Activated T-helper 2 cell treated with anti-CD3 and anti-CD28 coated beads, Interferon-gamma antibody, Interleukin-2, Interleukin-4, amounts not matched to agents 10 μg/mL and 5 μg/mL and 100 μg/mL, durations not matched to agents 14 hours and 24 hours and 36 hours (primary cell): ENCODE measurements at regions of chr1 and their contacts with region 1.

Region 1: GRCh38 chr1:235160957-235161684 is at the start of gene RBM34:
- DNase-seq: peak; percentile 91
- H3K4me3 Mint-ChIP-seq: peak within 1 kb of the TSS; percentile 99
- H3K27ac Mint-ChIP-seq: peak within 1 kb of the TSS; percentile 97
- H3K4me1 Mint-ChIP-seq: peaks cover 13% of the 10 kb centered on the region
- H3K27me3 Mint-ChIP-seq: no peaks in the 10 kb centered on the region
- total RNA-seq, gene RBM34: 122 and 125 TPM in 2 replicates

Region 2: DNA sequence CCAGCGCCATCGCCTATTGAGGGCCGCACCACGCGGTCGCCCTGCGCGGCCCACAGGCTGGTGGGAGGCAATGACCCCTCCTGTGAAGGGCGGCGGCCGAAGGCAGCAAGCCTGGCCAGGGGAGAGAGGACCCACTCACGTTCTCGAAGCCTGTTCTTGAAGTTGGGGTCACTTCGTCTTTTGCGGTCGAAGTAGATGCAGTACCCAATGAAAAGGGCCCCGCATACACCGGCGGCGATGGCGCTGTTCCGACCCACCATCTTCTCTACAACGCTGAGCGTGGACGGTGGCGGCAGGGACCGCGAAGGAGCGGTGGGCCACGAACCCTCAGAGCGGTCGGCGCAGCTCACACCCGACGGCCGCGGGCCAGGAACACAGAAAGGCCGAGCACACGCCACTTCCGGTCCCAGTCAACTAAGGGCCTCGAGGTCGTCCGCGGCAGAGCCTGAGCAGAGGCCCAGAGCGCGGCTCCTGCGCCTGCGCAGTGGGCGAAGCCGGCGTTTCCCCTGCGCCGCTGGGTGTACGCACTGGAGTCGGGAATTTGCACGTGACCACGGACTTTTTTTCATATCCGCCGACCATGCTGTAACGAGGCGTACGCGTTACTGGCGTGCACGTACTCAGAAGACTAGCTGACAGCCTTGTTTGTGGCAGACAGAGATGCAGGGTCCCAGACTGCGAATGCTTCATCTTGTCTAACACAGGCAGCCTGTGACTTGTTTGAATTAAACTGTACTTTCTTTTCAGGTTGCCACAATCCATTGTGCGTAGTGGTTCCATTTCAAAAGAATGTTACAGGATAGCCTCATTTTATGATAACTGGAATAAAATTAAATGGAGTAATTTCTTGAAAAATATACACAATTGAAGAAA is 32.4 kb before region 1 on chr1 and contains the start of gene TOMM20:
- intact Hi-C with region 1: loop called (anchors 1 kb)
- DNase-seq: peak; percentile 95
- H3K4me3 Mint-ChIP-seq: peak within 1 kb of the TSS; percentile 98
- H3K27ac Mint-ChIP-seq: peak within 1 kb of the TSS; percentile 97
- H3K4me1 Mint-ChIP-seq: peaks cover 37% of the 10 kb centered on the region
- H3K27me3 Mint-ChIP-seq: no peaks in the 10 kb centered on the region
- total RNA-seq, gene TOMM20: 105 and 118 TPM in 2 replicates

Region 3: DNA sequence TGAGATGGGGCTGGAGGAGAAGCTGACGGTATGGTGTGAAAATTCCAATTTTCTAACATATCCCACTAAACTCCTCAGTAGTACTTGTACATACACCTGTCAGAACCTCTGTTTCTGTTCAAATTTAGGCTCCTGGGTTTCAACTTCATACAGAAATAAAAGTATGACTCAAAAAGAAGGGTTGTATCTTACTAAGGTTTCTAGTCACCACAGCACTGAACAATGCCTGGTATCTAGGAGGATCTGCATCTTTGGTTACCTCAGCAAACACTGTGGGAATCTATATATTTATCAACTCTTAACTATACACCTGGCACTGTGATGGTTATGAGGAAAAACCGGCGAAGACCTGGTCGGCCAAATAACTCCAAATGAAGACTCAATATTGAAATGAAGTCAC is 13.9 kb before region 1 on chr1:
- intact Hi-C with region 1: no loop called
- DNase-seq: no peak
- H3K4me3 Mint-ChIP-seq: no peak overlapping the region
- H3K27ac Mint-ChIP-seq: no peak overlapping the region
- H3K4me1 Mint-ChIP-seq: peaks cover 17% of the 10 kb centered on the region
- H3K27me3 Mint-ChIP-seq: no peaks in the 10 kb centered on the region

Region 4: DNA sequence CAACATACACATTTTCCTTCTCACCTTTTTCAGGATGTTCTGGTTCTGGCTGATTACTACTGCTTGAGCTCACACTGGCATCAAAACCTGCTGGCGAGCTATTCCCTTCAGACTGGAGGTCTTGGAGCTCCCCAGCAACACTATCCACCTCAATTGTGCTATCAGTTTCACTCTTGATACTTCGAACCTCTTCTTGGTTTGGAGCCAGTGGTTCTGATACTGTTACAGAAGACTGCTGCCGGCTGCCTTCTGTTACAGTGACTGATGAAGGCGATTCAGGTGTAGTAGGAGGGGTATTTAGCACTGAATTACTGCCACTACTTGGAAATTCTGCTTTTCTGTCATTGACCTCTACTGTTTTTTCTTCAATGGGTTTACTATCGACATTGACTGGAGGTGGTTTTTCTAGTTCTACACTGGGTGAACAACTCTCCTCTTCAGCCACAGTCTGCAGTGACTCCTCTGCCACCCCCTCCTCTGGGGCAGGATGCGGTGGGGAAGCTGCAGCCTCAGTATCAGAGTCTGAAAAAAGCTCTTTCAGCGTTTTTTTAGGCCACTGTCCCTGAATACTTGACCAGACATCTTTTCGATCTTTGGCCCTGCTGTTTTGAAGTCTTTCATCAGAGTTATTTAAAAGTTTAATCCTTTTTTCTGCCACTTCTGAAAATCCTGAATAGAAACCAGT is 20.6 kb after region 1 on chr1:
- intact Hi-C with region 1: no loop called
- DNase-seq: no peak
- H3K4me3 Mint-ChIP-seq: no peak overlapping the region
- H3K27ac Mint-ChIP-seq: peak overlapping the region; percentile 50
- H3K4me1 Mint-ChIP-seq: peaks cover 19% of the 10 kb centered on the region
- H3K27me3 Mint-ChIP-seq: no peaks in the 10 kb centered on the region

Region 5: GRCh38 chr1:235206533-235207208 is 45.5 kb after region 1 on chr1:
- intact Hi-C with region 1: loop called (anchors 5 kb)
- DNase-seq: no peak
- H3K4me3 Mint-ChIP-seq: peak overlapping the region; percentile 26
- H3K27ac Mint-ChIP-seq: peak overlapping the region; percentile 92
- H3K4me1 Mint-ChIP-seq: peaks cover 28% of the 10 kb centered on the region
- H3K27me3 Mint-ChIP-seq: no peaks in the 10 kb centered on the region

Region 6: DNA sequence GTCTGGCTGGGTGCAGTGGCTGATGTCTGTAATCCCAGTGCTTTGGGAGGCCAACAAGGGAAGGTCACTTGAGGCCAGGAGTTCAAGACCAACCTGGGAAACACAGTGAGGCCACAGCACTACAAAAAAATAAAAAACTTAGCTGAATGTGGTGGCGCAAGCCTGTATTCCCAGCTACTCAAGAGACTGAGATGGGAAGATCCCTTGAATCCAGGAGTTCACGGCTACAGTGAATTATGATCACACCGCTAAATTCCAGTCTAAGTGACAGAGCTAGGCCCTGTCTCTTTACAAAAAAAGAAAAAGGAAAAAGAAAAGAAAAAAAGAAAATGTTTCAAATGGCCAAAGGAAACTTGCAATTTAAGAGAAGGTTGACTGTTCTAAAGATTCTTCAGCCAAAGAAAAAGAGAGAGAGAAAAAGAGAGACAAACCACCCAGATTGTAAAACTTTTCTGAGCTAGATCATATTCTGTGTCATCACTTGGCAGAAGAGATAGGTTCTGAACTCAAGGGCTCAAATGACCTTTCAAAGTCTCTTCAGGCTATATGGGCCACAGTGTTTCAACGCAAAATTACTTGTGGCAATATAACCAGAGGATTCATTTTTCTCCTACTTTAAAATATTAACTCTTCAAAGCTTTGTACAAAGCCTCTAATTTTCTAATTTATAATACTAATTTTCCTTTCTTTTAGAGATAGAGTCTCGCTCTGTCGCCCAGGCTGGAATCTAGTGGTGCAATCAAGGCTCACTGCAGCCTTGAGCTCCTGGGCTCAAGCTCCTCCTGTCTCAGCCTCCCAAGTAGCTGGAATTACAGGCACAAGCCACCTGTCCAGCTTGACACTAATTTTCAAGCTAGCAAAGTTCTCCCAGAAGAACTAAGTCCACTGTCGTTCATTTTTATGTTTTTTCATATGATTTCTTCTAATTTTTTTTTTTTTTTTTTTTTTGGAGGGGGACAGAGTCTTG is 146.3 kb after region 1 on chr1:
- intact Hi-C with region 1: no loop called
- DNase-seq: no peak
- H3K4me3 Mint-ChIP-seq: no peak overlapping the region
- H3K27ac Mint-ChIP-seq: peak overlapping the region; percentile 57
- H3K4me1 Mint-ChIP-seq: peaks cover 40% of the 10 kb centered on the region
- H3K27me3 Mint-ChIP-seq: no peaks in the 10 kb centered on the region

Region 7: DNA sequence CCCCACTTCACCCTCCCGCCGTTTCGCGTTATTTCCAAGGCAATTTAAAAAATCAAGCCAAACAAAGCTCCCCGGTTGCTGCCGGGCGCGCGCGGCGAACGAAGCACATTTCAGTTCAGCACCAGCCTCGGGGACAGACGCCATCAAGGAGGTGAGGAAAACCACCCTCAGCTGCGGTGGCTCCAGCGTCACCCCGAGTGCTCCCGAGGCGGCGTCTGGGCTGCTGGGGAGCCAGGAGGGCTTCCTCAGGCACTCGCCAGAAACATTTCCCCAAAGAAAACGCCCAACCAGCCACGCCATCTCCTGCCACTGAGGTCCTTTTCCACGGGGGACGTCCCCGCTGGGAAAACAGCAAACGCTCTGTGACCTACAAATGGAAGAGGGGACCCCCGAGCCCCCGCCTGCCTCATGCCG is 487.8 kb after region 1 on chr1:
- intact Hi-C with region 1: loop called (anchors 10 kb)
- DNase-seq: peak; percentile 50
- H3K4me3 Mint-ChIP-seq: peak overlapping the region; percentile 93
- H3K27ac Mint-ChIP-seq: peak overlapping the region; percentile 92
- H3K4me1 Mint-ChIP-seq: peaks cover 50% of the 10 kb centered on the region
- H3K27me3 Mint-ChIP-seq: peaks cover 45% of the 10 kb centered on the region